Heart left ventricle (tissue), 16 donors: ENCODE measurements at regions of chr11 and their contacts with region 1.

Region 1: DNA sequence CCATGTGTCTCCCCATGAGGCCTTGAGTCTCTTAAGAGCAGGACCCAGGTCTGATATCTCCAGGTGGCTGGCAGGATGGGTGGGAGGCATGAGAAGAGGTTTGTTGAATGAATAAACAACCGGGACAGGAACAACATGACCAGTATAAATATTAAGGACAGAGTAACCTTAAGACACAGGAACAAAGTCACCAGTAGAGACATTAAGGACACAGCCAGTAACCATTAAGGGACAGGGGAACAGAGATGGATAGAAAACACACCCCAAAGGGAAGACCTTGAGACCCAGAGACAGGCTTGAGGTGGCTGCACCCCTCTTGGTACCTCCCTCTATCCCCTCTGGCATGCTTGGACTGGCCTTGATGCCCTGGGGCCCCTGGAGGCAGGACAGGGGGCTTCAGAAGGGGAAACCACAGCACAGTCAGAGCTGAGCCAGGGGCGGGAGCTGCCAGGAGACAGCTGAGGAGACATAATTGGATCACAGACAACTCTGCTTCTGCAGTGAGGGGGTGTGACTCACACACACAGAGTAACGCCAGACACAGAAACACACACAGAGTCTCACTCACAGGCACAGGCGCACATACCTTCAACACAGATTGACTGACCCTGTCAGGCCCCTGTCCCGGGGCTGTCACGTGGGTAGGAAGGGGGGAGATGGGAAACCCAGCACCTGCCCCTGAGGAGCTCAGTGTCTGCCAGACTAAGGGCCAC is 20.7 kb downstream of the STARD10 start:
- DNase-seq: peak in 4 of 5 donors; percentile 57 to 73 (median 71)
- ATAC-seq: peak; percentile 59 to 84 (median 82)
- H3K4me3 ChIP-seq: no peak overlapping the region
- H3K27ac ChIP-seq: peak overlapping the region in 8 of 12 donors; percentile 23 to 71 (median 52)
- H3K4me1 ChIP-seq: peaks cover 0 to 37% (median 23%) of the 10 kb centered on the region in 12 donors
- H3K27me3 ChIP-seq: no peaks in the 10 kb centered on the region
- CTCF ChIP-seq: no peak
- POLR2A ChIP-seq: no peak

Region 2: GRCh38 chr11:72736452-72737069 is 36.6 kb before region 1 on chr11:
- intact Hi-C with region 1: loop called in 1 of 10 experiments (anchors 5 kb)
- DNase-seq: peak; percentile 57 to 82 (median 67)
- ATAC-seq: peak; percentile 19 to 62 (median 44)
- H3K4me3 ChIP-seq: peak overlapping the region in 1 of 12 donors; percentile 57
- H3K27ac ChIP-seq: peak overlapping the region in 8 of 12 donors; percentile 49 to 93 (median 67)
- H3K4me1 ChIP-seq: peaks cover 0 to 84% (median 24%) of the 10 kb centered on the region in 12 donors
- H3K27me3 ChIP-seq: no peaks in the 10 kb centered on the region
- CTCF ChIP-seq: no peak
- POLR2A ChIP-seq: peak in 1 of 2 donors; percentile 13